ENCODE measurements at regions of chr1 and their contacts with region 1.

Region 1: DNA sequence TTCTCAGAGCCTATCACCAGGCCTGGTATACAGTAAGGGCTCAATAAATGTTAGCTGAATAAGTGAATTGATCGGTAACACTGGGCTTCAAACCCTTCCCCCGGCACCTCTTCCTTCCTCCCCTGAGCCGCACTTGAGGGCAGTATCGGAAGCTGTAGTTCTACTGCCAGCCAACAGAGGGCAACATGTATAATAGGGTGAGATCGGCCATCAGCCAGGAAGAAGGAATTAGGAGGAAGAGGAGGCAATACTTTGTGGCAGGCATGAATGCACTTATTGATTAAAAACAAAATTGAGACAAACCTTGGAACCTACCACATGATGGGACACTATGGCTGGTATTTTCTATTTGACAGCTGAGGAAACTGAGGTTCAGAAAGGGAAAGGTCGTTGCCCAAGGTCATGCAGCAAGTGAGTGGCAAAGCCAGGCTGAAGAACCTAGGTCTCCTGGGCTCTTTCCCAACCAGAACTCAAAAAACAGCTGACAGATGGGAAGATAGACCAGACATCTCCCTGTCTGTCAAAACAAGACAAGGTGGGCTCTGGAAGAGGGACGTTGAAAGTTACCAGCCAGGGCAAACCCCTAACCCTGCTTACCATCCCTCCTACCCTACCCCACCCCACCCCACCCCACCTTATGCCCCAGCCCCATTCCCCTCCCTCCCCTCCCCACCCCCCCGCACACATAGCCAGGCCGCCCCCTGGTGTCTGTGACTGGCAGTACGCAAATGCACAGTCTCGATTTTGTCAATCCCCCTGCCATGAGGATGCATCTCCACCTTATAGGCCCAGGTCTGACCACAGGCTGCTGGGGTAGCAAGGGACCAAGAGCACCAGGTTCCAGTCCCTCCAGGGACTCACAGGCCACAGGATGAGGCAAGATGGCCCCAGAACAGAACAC is 107.3 kb upstream of the RUNX3 start:
- DNase-seq: peak; percentile 77
- CTCF ChIP-seq: peak; percentile 86

Region 2: GRCh38 chr1:23394684-23395083 is 1642.7 kb before region 1 on chr1:
- CTCF ChIA-PET with region 1: no interaction called
- POLR2A ChIA-PET with region 1: no interaction called
- DNase-seq: no peak
- CTCF ChIP-seq: no peak

Region 3: GRCh38 chr1:24930204-24931145 is 106.9 kb before region 1 on chr1 and contains the start of gene RUNX3:
- CTCF ChIA-PET with region 1: interaction called, 45 read pairs
- POLR2A ChIA-PET with region 1: no interaction called
- DNase-seq: peak; percentile 96
- CTCF ChIP-seq: peak; percentile 36

Region 4: DNA sequence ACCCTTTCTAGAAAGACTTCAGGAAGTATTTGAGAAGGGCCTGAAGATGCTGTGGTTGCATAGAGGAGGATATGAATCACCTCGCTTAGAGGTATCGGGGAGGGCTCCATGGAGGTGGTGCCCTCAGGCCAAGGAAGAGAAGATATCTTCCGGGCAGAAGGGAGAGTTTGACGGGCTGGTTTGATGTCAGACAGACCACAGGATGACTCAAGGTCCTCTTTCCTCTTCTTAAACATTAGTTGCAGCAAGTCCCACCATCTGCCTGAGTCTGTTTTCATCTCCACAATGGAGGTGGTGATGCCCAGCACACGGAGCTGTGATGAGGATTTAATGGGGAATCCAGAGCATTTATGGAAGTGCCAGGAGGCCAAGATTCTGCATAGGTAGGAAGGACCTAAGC is 82.3 kb before region 1 on chr1:
- CTCF ChIA-PET with region 1: interaction called, 25 read pairs
- POLR2A ChIA-PET with region 1: interaction called, 5 read pairs
- DNase-seq: peak; percentile 62
- CTCF ChIP-seq: no peak

Region 5: DNA sequence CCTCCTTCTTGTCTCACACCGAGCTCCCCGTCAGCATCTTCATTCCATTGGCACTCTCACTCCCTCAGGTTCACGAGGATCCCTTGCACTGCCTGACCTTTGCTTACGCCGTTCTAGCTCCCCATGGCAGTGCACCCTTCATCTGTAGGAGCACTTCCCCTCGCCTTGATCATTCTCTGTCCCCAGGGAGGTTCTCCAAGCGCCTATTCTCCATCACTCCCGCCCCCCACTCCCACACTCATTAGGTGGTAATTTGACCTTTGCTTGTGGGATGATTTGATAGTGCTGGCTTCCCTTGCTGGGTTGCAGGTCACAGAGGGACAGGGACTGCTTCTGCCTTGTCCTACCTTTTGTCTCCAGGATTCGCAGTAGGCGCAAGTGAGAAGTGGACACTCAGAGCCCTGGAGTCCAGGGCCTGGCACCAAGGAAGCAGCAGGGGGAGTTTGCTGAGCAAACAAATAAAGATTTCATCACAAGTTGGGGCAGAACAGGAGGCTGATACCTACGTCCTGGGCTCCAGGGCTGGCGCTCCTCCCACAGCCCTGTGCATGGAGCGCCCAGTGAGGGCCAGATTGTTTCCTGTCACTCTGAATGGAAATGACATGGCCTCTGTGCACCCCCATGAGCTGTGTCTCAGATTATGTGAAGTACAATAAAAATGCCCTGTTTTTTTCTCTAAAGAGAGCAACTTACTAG is 25.3 kb before region 1 on chr1:
- CTCF ChIA-PET with region 1: interaction called, 14 read pairs
- POLR2A ChIA-PET with region 1: no interaction called
- DNase-seq: no peak
- CTCF ChIP-seq: no peak

Region 6: GRCh38 chr1:25072461-25072860 is 35.0 kb after region 1 on chr1:
- CTCF ChIA-PET with region 1: interaction called, 10 read pairs
- POLR2A ChIA-PET with region 1: no interaction called
- DNase-seq: no peak
- CTCF ChIP-seq: no peak